ENCODE measurements at regions of chr3 and their contacts with region 1.

Region 1: DNA sequence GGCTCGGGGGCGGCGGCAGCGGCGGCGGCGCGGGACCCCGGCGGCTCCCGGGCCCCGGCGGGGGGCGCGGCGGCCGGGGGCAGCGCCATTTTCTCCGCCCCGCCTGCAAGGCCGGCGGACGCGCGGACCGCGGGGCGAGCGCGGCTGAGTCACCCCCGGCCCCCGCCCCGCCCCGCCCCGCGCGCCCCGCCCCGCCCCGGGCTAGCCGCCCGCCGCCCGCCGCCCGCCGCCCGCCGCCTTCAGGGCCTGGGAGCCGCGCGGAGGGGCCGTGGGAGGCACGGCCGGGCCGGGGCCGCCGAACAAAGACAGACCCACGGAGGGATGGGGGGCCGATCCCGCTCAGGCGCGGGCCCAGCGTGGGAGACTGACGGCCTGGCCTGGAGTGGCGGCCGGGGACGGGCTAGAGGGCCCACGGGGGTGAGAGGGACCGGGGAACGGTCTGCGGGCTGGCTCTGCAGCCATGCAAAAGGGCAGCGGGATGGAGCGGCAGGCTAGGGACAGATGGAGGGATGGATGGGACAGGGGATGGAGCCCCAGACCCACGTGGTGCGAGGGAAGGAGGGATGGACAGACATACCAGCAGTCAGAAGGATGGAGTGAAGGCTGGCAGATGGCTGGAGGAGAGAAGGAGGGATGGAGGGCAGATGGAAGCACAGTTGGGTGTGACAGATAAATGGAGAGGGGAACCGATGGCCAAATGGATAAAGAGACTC is at the start of gene EIF4E3:
- DNase-seq: peak; percentile 84
- H3K4me3 Mint-ChIP-seq: peak within 1 kb of the TSS; percentile 96
- H3K27ac Mint-ChIP-seq: peak within 1 kb of the TSS; percentile 94
- H3K4me1 Mint-ChIP-seq: peaks cover 71% of the 10 kb centered on the region
- H3K27me3 Mint-ChIP-seq: no peaks in the 10 kb centered on the region
- total RNA-seq, gene EIF4E3: 20.3 and 20.7 TPM in 2 replicates

Region 2: GRCh38 chr3:71702131-71703024 is 23.1 kb before region 1 on chr3:
- intact Hi-C with region 1: loop called (anchors 2 kb)
- DNase-seq: peak; percentile 84
- H3K4me3 Mint-ChIP-seq: peak overlapping the region; percentile 75
- H3K27ac Mint-ChIP-seq: peak overlapping the region; percentile 87
- H3K4me1 Mint-ChIP-seq: peaks cover 55% of the 10 kb centered on the region
- H3K27me3 Mint-ChIP-seq: no peaks in the 10 kb centered on the region

Region 3: DNA sequence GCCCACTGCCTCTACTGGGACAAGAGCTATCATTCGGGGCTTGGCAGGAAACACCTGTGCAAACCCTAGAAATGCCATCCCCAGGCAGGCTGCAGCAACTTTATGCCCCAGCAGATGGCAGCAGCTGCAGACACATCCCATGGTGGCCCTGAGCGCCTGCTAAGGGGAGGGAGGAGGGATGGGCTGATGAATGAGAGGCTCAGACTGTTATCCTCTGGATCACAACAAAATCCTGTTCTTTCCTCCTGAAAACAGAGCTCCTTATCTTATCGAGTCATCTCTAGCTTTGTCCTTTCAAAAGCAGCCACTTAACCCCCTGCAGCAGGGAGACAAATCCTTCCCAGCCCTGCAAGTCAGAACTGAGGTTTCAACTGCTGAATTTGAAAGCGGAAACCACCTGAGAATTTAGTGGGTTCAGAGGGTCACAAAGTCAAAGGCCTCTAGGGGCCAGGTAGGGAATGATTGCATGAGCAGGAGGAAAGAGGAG is 150.1 kb after region 1 on chr3:
- intact Hi-C with region 1: loop called (anchors 5 kb)
- DNase-seq: peak; percentile 93
- H3K4me3 Mint-ChIP-seq: peak overlapping the region; percentile 14
- H3K27ac Mint-ChIP-seq: peak overlapping the region; percentile 74
- H3K4me1 Mint-ChIP-seq: peaks cover 28% of the 10 kb centered on the region
- H3K27me3 Mint-ChIP-seq: peaks cover 12% of the 10 kb centered on the region

Region 4: GRCh38 chr3:72375237-72376076 is 650.0 kb after region 1 on chr3:
- intact Hi-C with region 1: loop called (anchors 10 kb)
- DNase-seq: peak; percentile 68
- H3K4me3 Mint-ChIP-seq: peak overlapping the region; percentile 43
- H3K27ac Mint-ChIP-seq: peak overlapping the region; percentile 80
- H3K4me1 Mint-ChIP-seq: peaks cover 47% of the 10 kb centered on the region
- H3K27me3 Mint-ChIP-seq: no peaks in the 10 kb centered on the region

Region 5: GRCh38 chr3:72629191-72629631 is 903.8 kb after region 1 on chr3:
- intact Hi-C with region 1: loop called (anchors 10 kb)
- DNase-seq: peak; percentile 60
- H3K4me3 Mint-ChIP-seq: peak overlapping the region; percentile 37
- H3K27ac Mint-ChIP-seq: peak overlapping the region; percentile 78
- H3K4me1 Mint-ChIP-seq: peaks cover 48% of the 10 kb centered on the region
- H3K27me3 Mint-ChIP-seq: no peaks in the 10 kb centered on the region

Region 6: DNA sequence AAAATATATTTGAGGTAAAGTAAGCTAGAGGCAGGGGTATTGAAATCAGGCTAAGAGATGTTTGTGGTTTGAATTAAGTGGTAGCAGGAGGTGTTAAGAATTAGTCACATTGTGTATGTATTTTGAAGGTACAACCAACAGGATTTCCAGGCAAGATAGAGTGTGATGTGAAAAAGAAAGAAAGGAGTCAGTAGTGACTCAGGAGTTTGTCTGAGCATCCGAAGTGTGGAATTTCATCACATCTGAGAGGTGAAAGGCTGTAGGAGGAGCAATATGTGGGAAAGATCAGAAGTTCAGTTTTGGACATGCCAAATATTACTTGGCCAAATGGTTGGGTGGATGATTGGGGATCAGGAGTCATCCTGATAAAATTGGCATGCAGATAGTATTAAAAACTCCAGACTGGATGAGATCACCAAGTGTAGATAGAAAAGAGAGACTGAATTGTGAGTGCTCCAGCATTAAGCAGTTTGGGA is 1303.9 kb after region 1 on chr3:
- intact Hi-C with region 1: loop called (anchors 1 kb)
- DNase-seq: no peak
- H3K4me3 Mint-ChIP-seq: peak overlapping the region; percentile 5
- H3K27ac Mint-ChIP-seq: peak overlapping the region; percentile 49
- H3K4me1 Mint-ChIP-seq: peaks cover 50% of the 10 kb centered on the region
- H3K27me3 Mint-ChIP-seq: no peaks in the 10 kb centered on the region

Measured in activated CD4-positive, alpha-beta T cell treated with anti-CD3 and anti-CD28 coated beads, Interleukin-2, amount 10 ng/mL, durations not matched to agents 24 days and 14 days (primary cell).